ENCODE measurements at regions of chr20 and their contacts with region 1.

Region 1: GRCh38 chr20:32484958-32485769 is 100.0 kb downstream of the NOL4L start:
- DNase-seq: peak; percentile 84 to 90
- ATAC-seq: peak; percentile 76
- H3K4me3 ChIP-seq: peak overlapping the region; percentile 30 to 84
- H3K27ac ChIP-seq: no peak overlapping the region
- H3K4me1 ChIP-seq: no peaks in the 10 kb centered on the region
- H3K27me3 ChIP-seq: no peaks in the 10 kb centered on the region

Region 2: GRCh38 chr20:32207626-32208498 is 277.3 kb before region 1 on chr20 and contains the starts of genes PLAGL2 and POFUT1:
- intact Hi-C with region 1: loop called in 1 of 2 experiments (anchors 10 kb)
- DNase-seq: peak; percentile 94 to 97
- ATAC-seq: peak; percentile 96
- H3K4me3 ChIP-seq: peak within 1 kb of the TSS; percentile 88 to 95
- H3K27ac ChIP-seq: peak within 1 kb of the TSS in 1 of 2 donors; percentile 26
- H3K4me1 ChIP-seq: peaks cover 0 to 3% of the 10 kb centered on the region in 2 donors
- H3K27me3 ChIP-seq: no peaks in the 10 kb centered on the region
- total RNA-seq, gene PLAGL2: 8.2 to 9.8 TPM
- total RNA-seq, gene POFUT1: 29.8 to 35.2 TPM

Region 3: DNA sequence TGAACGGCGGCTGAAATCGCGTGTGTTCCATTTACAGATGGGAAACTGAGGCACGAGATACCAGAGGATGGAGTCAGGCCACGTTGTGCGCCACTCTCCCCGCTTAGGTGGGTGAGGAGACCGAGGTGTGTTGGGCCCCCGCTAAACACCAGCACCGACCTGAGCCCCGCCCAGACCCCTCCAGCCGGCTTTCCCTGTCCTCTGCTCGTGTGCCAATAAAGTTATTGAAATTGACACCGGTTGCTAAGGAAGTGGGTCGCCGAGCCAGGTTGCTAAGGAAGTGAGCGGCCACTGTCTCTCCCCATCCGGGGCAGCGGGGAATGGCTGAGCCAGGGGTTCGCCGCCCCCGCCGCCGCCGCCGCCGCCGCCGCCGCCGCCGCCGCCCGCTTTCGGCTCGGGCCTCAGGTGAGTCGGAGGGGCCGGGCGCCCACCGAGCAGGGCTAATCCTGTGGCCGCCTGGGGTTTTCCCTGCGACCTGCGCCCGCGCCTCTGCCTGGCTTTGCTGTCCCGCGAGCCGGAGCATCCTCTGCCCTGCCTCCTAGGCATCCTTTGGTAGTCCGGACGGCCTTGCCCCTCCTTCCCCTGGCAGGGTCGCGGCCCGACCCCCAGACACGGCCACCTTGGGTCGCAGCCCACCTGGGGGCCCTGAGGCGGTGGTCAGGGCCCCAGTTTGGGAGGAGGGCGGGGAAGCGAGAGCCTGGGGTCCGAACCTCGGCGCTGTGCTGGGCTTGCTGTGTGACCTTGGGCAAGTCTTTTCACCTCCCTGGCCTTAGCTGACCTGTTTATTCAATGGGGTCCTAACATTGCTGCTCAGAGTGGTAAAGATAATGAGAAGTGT is 207.6 kb before region 1 on chr20 and contains the start of gene KIF3B:
- intact Hi-C with region 1: loop called in 1 of 2 experiments (anchors 10 kb)
- DNase-seq: peak; percentile 92 to 93
- ATAC-seq: peak; percentile 91
- H3K4me3 ChIP-seq: peak within 1 kb of the TSS; percentile 22 to 81
- H3K27ac ChIP-seq: peak within 1 kb of the TSS in 1 of 2 donors; percentile 38
- H3K4me1 ChIP-seq: no peaks in the 10 kb centered on the region
- H3K27me3 ChIP-seq: no peaks in the 10 kb centered on the region
- total RNA-seq, gene KIF3B: 26.6 to 28.0 TPM

Region 4: DNA sequence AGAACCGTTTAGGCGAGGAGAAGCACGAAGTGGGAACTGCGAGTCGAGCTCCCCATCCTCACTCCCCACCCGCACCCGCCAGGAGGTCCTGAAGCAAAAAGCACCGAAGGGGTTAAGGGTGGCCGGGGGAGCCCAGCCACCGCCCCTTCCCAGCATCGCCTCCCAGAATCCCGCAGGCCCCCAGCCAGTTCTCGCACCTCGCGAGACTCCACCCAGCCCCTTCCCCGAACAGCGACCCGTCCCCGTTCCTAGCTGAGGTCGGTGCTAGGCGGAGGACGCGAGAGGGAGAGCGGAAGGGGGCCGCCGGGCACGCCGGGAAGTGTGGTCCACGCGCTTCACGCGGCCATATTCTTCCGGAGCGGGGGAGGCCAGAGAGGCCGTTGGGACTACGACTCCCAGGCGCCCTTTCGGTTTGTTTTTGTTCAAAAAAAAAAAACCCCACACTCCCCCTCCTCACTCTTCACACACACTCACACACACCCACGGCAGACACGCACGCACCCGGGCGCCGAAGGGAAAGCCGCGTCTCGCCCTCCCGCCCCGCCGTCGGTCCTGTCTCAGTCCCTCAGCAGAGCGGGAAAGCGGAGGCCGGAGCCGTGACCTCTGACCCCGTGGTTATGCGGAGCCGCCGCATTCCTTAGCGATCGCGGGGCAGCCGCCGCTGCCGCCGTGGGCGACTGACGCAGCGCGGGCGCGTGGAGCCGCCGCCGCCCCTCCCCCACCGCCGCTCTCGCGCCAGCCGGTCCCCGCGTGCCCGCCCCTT is 127.1 kb before region 1 on chr20 and contains the start of gene ASXL1:
- intact Hi-C with region 1: loop called in 1 of 2 experiments (anchors 5 kb)
- DNase-seq: peak; percentile 99
- ATAC-seq: peak; percentile 99
- H3K4me3 ChIP-seq: peak within 1 kb of the TSS; percentile 86 to 89
- H3K27ac ChIP-seq: peak within 1 kb of the TSS; percentile 97 to 98
- H3K4me1 ChIP-seq: no peaks in the 10 kb centered on the region
- H3K27me3 ChIP-seq: no peaks in the 10 kb centered on the region
- total RNA-seq, gene ASXL1: 92.5 to 102 TPM

Region 5: GRCh38 chr20:32664678-32665159 is 179.6 kb after region 1 on chr20:
- intact Hi-C with region 1: no loop called
- DNase-seq: no peak
- ATAC-seq: no peak
- H3K4me3 ChIP-seq: no peak overlapping the region
- H3K27ac ChIP-seq: no peak overlapping the region
- H3K4me1 ChIP-seq: no peaks in the 10 kb centered on the region
- H3K27me3 ChIP-seq: no peaks in the 10 kb centered on the region

Measured in aorta (tissue), 5 donors.